AG04449 (cell line): ENCODE measurements at regions of chr17 and their contacts with region 1.

Region 1: DNA sequence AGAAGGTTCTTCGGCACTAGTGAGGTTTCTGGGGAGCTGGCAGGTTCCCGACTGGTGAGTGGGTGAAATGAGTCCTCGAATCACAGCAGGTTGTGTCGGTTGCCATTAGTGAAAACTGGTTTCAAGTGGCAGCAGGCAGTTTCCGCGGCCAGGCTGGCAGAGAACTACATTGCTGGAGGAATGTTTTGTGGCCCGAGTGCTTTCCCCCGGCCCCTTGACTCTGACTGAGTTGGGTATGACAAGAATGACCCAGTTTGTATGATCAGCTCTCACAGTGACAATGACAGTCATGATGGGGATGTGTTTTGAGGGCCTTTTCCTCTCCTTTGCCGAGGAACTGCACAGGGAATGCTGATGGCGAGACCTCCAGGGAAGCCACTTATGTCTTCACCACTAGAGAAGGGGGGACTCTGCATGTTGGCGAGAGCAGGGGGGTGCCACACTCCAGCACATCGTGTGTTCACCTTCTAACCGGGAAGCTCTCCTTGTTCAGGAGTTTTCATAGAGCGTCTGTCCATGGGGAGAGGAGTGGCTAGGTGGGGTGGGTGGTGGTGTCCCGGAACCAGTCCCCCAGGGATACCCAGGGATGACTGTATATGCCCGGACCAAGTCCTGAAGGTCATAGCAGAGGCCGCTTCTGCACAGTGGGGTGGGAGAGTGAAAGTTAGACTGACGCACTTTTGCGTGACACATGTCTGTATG is 206.0 kb upstream of the CHMP6 start:
- DNase-seq: no peak
- H3K4me3 ChIP-seq: no peak overlapping the region
- CTCF ChIP-seq: no peak

Region 2: DNA sequence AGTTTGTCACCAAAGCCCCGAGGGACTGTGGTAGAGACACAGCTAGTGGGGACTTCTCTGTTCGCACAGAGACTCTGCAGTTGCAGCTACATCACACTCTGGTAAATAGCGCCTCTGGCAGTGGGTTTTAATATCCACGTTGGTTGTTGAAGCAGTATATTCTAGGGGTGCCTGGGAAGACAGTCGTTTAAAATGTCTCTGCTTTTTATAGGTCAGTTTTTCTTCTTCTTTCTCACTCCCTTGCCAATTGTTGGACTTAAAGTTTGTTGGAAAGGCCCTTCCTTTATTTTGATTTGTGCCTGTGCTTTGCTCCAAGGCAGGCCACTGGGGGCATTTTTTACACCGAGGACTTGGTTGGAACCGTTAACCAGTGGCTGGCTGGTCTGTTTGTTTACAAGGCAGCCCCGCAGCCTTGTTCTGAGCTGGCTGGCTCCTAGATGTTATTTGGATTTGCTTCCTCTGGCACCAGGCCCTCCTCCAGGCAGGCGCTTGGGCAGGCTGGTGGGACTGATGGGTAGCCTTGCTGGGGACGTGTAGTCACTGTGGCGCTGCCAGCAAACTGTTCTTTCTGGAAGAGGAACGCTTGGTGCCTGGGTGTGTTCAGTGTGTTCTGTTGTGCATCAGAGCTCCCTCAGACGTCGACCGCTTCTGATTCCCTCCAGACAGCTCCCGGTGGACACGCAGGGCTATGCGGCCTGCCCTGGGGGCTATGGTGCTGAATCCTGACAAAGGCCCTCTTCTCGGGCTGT is 12.2 kb before region 1 on chr17:
- CTCF ChIA-PET with region 1: interaction called, 13 read pairs
- POLR2A ChIA-PET with region 1: no interaction called
- DNase-seq: no peak
- H3K4me3 ChIP-seq: no peak overlapping the region
- CTCF ChIP-seq: no peak